Sigmoid colon (tissue), 7 donors: ENCODE measurements at regions of chr16 and their contacts with region 1.

Region 1: DNA sequence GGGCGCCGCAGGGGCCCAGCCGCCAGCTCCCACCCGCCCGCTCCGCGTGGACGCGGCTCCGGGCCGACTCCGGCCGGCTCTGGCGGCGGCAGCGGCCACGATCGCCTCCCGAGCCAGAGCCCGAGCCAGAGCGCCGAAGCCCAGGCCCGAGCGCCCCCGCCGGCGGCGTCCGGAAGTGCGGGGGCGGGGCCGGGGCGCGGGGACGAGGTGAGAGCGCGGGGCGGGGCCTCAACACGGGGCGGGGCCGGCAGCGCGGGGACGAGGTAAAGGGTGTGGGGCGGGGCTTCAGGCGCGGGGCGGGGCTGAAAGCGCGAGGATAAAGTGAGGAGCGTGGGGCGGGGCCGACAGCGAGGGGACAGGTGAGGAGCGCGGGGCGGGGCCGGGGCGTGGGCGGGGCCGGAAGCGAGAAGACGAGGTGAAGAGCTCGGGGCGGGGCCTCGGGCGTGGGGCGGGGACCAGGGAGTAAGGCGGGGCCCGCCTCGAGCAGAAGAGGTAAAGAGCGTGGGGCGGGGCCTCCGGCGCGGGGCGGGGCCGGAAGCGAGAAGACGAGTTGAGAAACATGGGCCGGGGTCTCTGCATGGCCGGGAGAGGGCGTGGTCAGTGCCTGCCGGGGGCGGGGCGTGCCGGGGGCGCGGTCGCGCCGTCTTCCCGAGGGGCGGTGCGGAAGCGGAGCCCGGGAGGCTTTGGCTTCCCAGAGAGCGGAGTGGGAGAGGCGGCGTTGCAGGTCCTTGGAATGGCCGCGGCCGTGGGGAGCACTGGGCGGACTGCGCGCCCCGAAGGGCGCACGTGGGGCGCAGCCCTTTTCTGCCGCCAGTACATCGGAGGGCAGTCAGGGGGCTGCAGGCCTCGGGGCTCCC is at the start of gene AXIN1:
- DNase-seq: peak; percentile 100
- H3K4me3 ChIP-seq: peak within 1 kb of the TSS; percentile 47 to 86 (median 81)
- H3K27ac ChIP-seq: peak within 1 kb of the TSS; percentile 73 to 84 (median 79)
- H3K4me1 ChIP-seq: peaks cover 0 to 17% (median 13%) of the 10 kb centered on the region in 4 donors
- H3K27me3 ChIP-seq: no peaks in the 10 kb centered on the region
- CTCF ChIP-seq: peak in 1 of 4 experiments; percentile 64
- EP300 ChIP-seq: no peak
- POLR2A ChIP-seq: peak in 1 of 2 donors; percentile 65
- total RNA-seq, gene AXIN1: 17.9 to 29.9 (median 20.9) TPM

Region 2: DNA sequence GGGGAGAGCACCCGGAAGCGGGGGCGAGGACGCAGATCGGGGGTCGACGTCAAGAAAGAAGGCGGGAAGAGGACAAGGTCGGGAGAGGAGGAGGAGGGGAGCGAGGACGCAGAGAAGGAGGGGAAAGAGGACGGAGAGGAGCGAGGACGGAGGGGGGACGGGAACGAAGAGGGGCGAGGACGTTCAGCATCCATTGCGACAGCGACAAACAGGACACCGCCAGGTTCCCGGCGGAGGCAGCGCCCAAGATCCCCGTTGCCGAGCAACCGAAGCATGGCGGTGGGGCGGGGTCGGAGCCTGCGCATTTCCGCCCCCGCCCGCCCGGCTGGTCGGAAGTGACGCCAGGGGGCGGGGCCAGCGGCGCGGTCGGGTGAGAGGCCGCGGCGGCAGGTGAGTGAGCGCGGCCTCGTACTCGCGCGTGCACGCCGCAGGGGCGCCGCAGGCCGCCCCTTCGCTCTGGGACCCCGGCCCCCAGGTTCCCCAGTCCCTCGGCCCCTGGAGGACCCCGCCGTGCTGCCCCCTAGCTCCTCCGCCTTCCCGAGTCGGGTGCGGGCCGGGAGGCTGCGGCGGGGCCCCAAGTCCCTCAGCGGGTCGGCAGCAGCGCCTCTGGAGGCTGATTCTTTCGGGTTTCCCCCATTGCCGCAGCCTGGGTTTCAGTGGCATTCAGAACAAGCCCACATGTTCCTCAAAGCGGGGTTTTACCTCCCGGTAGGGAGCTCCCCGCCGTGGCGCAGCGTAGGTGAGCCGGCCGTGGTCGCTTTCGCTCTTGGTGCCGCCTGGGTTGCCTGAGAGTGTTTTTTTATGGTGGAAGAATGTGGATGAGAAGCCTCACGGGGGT is 118.1 kb before region 1 on chr16 and contains the start of gene FAM234A:
- intact Hi-C with region 1: loop called (anchors 2 kb)
- DNase-seq: peak; percentile 97
- H3K4me3 ChIP-seq: peak within 1 kb of the TSS; percentile 67 to 83 (median 76)
- H3K27ac ChIP-seq: peak within 1 kb of the TSS; percentile 92 to 98 (median 96)
- H3K4me1 ChIP-seq: peaks cover 0 to 21% (median 19%) of the 10 kb centered on the region in 4 donors
- H3K27me3 ChIP-seq: no peaks in the 10 kb centered on the region
- CTCF ChIP-seq: peak in 2 of 4 experiments; percentile 33 to 41
- EP300 ChIP-seq: no peak
- POLR2A ChIP-seq: peak in 1 of 2 donors; percentile 51
- total RNA-seq, gene FAM234A: 38.3 to 82.5 (median 62.1) TPM

Region 3: GRCh38 chr16:275041-275621 is 77.6 kb before region 1 on chr16:
- intact Hi-C with region 1: loop called (anchors 2 kb)
- DNase-seq: no peak
- H3K4me3 ChIP-seq: peak overlapping the region; percentile 41 to 60 (median 54)
- H3K27ac ChIP-seq: peak overlapping the region in 2 of 4 donors; percentile 10 to 22
- H3K4me1 ChIP-seq: peaks cover 0 to 22% (median 16%) of the 10 kb centered on the region in 4 donors
- H3K27me3 ChIP-seq: peaks cover 0 to 21% (median 17%) of the 10 kb centered on the region in 3 donors
- CTCF ChIP-seq: no peak
- EP300 ChIP-seq: no peak
- POLR2A ChIP-seq: no peak

Region 4: DNA sequence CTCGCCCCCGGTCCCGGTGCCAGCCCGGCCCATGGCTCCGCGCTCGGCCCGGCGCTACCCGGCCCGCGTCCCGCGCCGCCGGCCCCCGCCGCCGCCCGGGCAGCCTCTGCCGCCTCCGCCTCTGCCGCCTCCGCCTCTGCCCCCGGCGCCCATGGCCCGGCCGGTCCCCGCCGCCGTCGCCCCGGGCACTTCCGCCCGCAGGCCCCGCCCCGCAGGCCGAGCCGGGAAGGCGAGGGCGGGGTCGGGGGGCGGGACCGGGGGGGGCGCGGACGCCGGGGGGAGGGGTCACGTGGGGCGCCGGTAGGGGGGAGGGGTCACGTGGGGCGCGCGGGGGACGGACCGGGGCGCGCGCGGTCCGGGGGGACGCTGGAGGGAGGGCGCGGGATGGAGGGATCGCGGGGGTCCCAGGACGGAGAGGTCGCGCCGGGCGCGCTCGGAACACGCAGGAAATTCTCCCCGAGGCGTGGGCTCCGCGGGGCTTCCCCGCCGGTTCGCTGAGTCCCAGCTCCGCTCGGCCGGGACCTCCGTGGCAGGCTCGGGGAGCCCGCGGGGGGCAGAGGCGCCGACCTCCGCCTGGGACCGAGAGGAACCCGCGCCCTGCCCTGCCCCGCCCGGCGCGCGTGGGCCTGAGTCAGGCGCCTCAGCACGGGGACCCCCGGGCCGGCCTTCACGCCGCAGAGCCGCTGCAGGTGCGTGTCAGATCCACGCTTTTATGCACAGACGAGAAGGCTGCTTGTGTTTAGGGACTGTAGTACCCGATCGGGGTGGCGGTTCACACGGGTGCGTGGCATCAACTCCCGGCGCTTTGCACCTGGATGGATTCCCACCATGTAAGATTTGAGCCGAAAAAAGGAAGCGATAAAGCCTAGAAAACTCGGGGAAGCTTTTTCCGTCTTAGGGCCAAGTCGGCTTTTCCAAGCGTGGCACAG is 29.3 kb after region 1 on chr16 and contains the start of gene PGAP6:
- intact Hi-C with region 1: no loop called
- DNase-seq: peak; percentile 83
- H3K4me3 ChIP-seq: peak within 1 kb of the TSS; percentile 76 to 99 (median 81)
- H3K27ac ChIP-seq: peak within 1 kb of the TSS; percentile 82 to 89 (median 86)
- H3K4me1 ChIP-seq: peaks cover 3 to 59% (median 41%) of the 10 kb centered on the region in 4 donors
- H3K27me3 ChIP-seq: no peaks in the 10 kb centered on the region
- CTCF ChIP-seq: no peak
- EP300 ChIP-seq: no peak
- POLR2A ChIP-seq: no peak
- total RNA-seq, gene PGAP6: 20.7 to 26.6 (median 22.7) TPM

Region 5: GRCh38 chr16:401468-402348 is 48.9 kb after region 1 on chr16 and contains the start of gene DECR2:
- intact Hi-C with region 1: loop called (anchors 2 kb)
- DNase-seq: peak; percentile 97
- H3K4me3 ChIP-seq: peak within 1 kb of the TSS; percentile 66 to 90 (median 87)
- H3K27ac ChIP-seq: peak within 1 kb of the TSS; percentile 91 to 96 (median 93)
- H3K4me1 ChIP-seq: peaks cover 0 to 42% (median 33%) of the 10 kb centered on the region in 4 donors
- H3K27me3 ChIP-seq: no peaks in the 10 kb centered on the region
- CTCF ChIP-seq: peak; percentile 10 to 56 (median 35)
- EP300 ChIP-seq: no peak
- POLR2A ChIP-seq: peak in 1 of 2 donors; percentile 76
- total RNA-seq, gene DECR2: 15.0 to 21.6 (median 16.4) TPM